Breast epithelium (tissue), 4 donors: ENCODE measurements at regions of chr7 and their contacts with region 1.

Region 1: DNA sequence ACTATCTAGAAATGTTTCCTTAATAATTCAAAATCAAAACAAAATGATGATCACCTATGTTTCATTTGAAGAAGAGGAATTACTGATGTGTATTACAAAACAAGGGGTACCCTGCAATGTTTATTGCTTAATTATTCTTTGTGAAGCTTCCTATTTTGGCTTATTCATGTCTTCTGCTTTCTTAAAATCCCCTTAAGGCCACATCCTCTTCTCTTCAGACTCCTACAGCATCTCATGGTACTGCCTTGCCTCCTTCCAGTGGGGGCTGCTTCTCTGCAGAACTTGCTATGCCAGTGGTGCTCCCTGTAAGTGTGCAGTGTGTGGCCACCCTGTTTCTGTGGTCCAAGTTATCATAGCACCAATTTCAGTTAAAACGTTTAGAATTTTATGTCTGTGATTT is 35.0 kb downstream of the CCDC146 start:
- DNase-seq: no peak
- H3K4me3 ChIP-seq: no peak overlapping the region
- H3K27ac ChIP-seq: peak overlapping the region in 1 of 2 donors; percentile 9
- H3K4me1 ChIP-seq: no peaks in the 10 kb centered on the region
- H3K27me3 ChIP-seq: no peaks in the 10 kb centered on the region
- CTCF ChIP-seq: no peak
- POLR2A ChIP-seq: no peak

Region 2: DNA sequence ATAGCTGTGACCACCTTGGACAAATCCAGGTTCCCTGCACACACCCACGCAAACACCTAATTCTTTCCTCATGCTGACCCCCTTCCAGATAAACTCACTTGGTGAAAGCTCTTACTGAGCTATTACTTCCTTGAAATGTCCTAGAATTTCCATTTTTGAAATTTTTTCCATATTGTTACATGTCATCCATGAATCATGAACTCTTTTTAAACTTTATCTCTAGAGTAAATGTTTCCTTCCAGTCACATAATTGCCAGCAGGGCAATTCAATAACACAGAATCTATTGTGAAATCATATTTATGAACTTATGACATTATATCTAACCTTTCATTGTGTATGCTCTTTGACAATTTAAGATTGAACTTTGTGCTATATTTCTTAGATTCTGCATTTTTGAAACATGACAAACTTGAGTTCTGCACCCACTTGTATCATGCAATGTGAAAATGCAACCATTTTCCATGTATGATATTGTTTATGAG is 69.0 kb after region 1 on chr7:
- intact Hi-C with region 1: loop called (anchors 5 kb)
- DNase-seq: no peak
- H3K4me3 ChIP-seq: no peak overlapping the region
- H3K27ac ChIP-seq: peak overlapping the region in 1 of 2 donors; percentile 61
- H3K4me1 ChIP-seq: no peaks in the 10 kb centered on the region
- H3K27me3 ChIP-seq: no peaks in the 10 kb centered on the region
- CTCF ChIP-seq: no peak
- POLR2A ChIP-seq: no peak